Natural killer cell (primary cell): ENCODE measurements at regions of chr2 and their contacts with region 1.

Region 1: DNA sequence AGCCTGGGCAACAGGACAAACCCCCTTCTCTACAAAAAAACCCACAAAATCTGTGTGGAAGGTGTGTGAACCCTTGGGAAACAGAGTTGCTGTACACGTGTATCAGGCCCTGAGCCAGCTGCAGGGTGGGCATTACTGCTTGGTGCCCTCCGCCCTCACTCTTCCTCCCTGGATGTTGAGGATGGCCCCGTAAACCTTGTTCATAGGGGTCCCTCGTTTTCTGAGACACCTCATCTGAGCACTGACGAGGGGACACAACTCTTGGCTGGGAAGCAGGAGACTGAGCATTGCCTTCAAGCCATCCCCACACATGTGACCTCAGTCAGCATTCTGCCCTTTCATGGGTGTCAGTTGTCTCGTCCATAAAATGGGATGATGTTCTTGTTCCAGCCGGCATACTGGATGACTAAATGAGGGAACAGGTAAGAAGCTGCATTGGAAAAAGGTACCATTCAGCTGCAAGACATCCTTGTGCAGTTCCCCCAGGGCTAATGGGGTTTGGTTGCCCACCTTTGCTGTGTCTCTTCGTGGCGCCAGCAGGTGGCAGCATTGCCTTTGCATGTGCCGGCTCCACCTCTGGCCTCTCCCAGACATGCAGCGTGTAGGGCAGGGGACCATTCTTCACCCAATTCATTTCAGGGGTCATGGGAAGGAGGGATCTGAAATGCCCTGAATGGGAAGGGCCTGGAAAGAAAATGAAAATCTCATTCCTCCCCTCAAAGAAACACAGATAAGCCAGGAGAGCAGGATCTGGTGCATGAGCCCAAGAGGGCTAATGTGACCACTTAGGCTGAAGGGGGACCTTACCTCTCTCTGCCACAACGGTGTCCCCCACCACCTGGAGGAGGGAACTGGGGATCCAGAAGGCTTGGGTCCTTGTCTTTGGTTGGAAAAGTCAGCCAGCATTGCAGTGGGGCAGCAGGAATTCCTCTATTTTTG is 36.4 kb upstream of the HAAO start:
- DNase-seq: peak; percentile 60 to 88
- ATAC-seq: peak; percentile 84 to 92 (median 89)
- H3K4me3 ChIP-seq: no peak overlapping the region
- H3K4me3 Mint-ChIP-seq: no peak overlapping the region
- H3K27ac ChIP-seq: no peak overlapping the region
- H3K27ac Mint-ChIP-seq: no peak overlapping the region
- H3K4me1 ChIP-seq: peaks cover 14% of the 10 kb centered on the region
- H3K4me1 Mint-ChIP-seq: peaks cover 10 to 16% of the 10 kb centered on the region in 2 donors
- H3K27me3 ChIP-seq: no peaks in the 10 kb centered on the region
- H3K27me3 Mint-ChIP-seq: peaks cover 0 to 12% of the 10 kb centered on the region in 2 donors
- CTCF ChIP-seq: peak; percentile 92

Region 2: GRCh38 chr2:43105586-43106558 is 277.1 kb after region 1 on chr2:
- intact Hi-C with region 1: no loop called
- DNase-seq: no peak
- ATAC-seq: no peak
- H3K4me3 ChIP-seq: no peak overlapping the region
- H3K4me3 Mint-ChIP-seq: no peak overlapping the region
- H3K27ac ChIP-seq: peak overlapping the region; percentile 48
- H3K27ac Mint-ChIP-seq: peak overlapping the region in 1 of 2 donors; percentile 36
- H3K4me1 ChIP-seq: peaks cover 46% of the 10 kb centered on the region
- H3K4me1 Mint-ChIP-seq: peaks cover 5 to 24% of the 10 kb centered on the region in 2 donors
- H3K27me3 ChIP-seq: no peaks in the 10 kb centered on the region
- H3K27me3 Mint-ChIP-seq: no peaks in the 10 kb centered on the region
- CTCF ChIP-seq: no peak

Region 3: GRCh38 chr2:43484323-43484930 is 655.7 kb after region 1 on chr2:
- intact Hi-C with region 1: loop called (anchors 2 kb)
- DNase-seq: peak in 1 of 2 donors; percentile 82
- ATAC-seq: peak in 2 of 3 donors; percentile 44 to 63
- H3K4me3 ChIP-seq: no peak overlapping the region
- H3K4me3 Mint-ChIP-seq: no peak overlapping the region
- H3K27ac ChIP-seq: no peak overlapping the region
- H3K27ac Mint-ChIP-seq: no peak overlapping the region
- H3K4me1 ChIP-seq: no peaks in the 10 kb centered on the region
- H3K4me1 Mint-ChIP-seq: peaks cover 9% of the 10 kb centered on the region in 2 donors
- H3K27me3 ChIP-seq: no peaks in the 10 kb centered on the region
- H3K27me3 Mint-ChIP-seq: no peaks in the 10 kb centered on the region
- CTCF ChIP-seq: peak; percentile 84

Region 4: GRCh38 chr2:43542285-43542937 is 713.7 kb after region 1 on chr2:
- intact Hi-C with region 1: loop called (anchors 1 kb)
- DNase-seq: peak in 1 of 2 donors; percentile 69
- ATAC-seq: peak in 1 of 3 donors; percentile 57
- H3K4me3 ChIP-seq: no peak overlapping the region
- H3K4me3 Mint-ChIP-seq: no peak overlapping the region
- H3K27ac ChIP-seq: no peak overlapping the region
- H3K27ac Mint-ChIP-seq: no peak overlapping the region
- H3K4me1 ChIP-seq: peaks cover 4% of the 10 kb centered on the region
- H3K4me1 Mint-ChIP-seq: no peaks in the 10 kb centered on the region
- H3K27me3 ChIP-seq: no peaks in the 10 kb centered on the region
- H3K27me3 Mint-ChIP-seq: no peaks in the 10 kb centered on the region
- CTCF ChIP-seq: peak; percentile 68

Region 5: DNA sequence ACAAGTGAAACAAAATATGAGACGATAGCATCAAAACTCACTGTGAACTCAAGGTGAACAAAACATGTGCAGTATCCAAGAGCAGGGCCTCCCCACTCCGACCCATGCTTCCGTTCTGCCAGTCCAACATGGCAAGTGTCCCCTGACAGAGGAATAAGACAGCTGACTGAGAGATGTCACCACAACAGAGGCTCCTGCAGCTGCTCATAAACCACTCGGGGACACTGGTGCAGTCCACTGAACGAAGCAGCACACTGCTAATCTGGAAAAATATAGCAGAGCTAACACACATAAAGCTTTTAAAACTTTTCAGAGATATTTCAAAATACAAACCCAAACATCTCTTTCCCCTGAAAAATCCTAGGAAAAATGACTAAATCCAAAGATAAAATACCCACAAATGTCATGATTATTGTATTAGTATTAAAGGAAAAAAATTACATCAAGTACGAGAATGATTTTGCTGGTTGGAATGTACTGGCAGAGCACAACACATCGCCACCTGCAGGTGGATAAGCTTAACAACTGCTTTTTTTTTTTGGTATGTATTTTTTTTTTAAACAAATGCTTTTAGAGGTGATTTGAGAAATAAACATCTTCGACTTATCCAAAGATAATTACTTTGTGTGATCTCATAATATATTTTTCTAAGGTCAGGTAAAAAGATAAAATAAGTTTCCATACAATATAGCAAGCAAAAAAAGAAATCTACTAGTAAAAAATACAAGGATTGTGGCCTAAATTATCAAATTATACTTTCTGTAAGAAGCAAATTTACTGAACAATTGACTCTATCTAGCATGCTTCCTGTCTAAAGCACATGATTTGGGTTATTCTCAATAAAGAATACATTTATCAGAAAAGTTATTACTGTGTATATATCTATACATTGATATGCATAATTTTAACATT is 748.5 kb after region 1 on chr2:
- intact Hi-C with region 1: loop called (anchors 10 kb)
- DNase-seq: peak in 1 of 2 donors; percentile 77
- ATAC-seq: peak; percentile 59 to 68 (median 61)
- H3K4me3 ChIP-seq: no peak overlapping the region
- H3K4me3 Mint-ChIP-seq: no peak overlapping the region
- H3K27ac ChIP-seq: no peak overlapping the region
- H3K27ac Mint-ChIP-seq: no peak overlapping the region
- H3K4me1 ChIP-seq: no peaks in the 10 kb centered on the region
- H3K4me1 Mint-ChIP-seq: no peaks in the 10 kb centered on the region
- H3K27me3 ChIP-seq: no peaks in the 10 kb centered on the region
- H3K27me3 Mint-ChIP-seq: no peaks in the 10 kb centered on the region
- CTCF ChIP-seq: peak; percentile 81

Region 6: DNA sequence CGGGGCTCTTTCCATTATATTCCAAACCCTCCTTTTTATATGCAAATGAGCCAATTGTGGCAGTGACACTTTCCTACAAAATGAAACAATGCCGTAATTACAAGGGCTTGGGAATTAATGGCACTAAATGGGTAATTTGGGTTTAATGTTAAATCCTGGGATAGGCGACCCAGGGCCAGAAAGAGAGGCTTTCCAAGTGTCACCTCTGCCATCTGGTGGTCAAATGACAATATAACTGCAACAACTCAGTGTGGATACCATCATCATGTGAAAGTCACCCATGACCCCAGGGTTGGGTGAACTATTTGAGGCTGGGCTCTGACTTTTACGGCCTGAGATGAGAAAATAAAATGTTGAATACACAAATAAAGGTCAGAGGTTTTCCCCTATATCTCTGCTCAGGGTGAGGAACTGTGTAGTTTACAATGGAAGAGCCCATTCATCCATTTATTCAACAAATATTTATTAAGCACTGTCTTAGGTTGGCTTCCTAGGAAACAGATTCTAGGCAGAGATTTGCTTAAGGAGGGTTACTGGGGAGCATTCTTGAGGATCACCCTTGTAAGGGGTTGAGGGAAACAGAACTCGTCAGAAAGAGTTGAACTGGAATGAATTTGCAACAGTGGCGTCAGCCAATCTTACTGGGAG is 780.7 kb after region 1 on chr2:
- intact Hi-C with region 1: loop called (anchors 5 kb)
- DNase-seq: peak in 1 of 2 donors; percentile 76
- ATAC-seq: peak; percentile 51 to 73 (median 68)
- H3K4me3 ChIP-seq: no peak overlapping the region
- H3K4me3 Mint-ChIP-seq: no peak overlapping the region
- H3K27ac ChIP-seq: no peak overlapping the region
- H3K27ac Mint-ChIP-seq: no peak overlapping the region
- H3K4me1 ChIP-seq: no peaks in the 10 kb centered on the region
- H3K4me1 Mint-ChIP-seq: peaks cover 0 to 5% of the 10 kb centered on the region in 2 donors
- H3K27me3 ChIP-seq: no peaks in the 10 kb centered on the region
- H3K27me3 Mint-ChIP-seq: peaks cover 6 to 8% of the 10 kb centered on the region in 2 donors
- CTCF ChIP-seq: peak; percentile 77